MCF 10A (cell line): ENCODE measurements at regions of chr20 and their contacts with region 1.

Region 1: GRCh38 chr20:25039396-25040115 is 18.4 kb downstream of the ACSS1 start:
- DNase-seq: peak; percentile 90
- H3K4me3 Mint-ChIP-seq: peak overlapping the region; percentile 25
- H3K27ac Mint-ChIP-seq: peak overlapping the region; percentile 81
- H3K4me1 Mint-ChIP-seq: peaks cover 20% of the 10 kb centered on the region
- H3K27me3 Mint-ChIP-seq: peaks cover 11% of the 10 kb centered on the region
- CTCF ChIP-seq: no peak

Region 2: DNA sequence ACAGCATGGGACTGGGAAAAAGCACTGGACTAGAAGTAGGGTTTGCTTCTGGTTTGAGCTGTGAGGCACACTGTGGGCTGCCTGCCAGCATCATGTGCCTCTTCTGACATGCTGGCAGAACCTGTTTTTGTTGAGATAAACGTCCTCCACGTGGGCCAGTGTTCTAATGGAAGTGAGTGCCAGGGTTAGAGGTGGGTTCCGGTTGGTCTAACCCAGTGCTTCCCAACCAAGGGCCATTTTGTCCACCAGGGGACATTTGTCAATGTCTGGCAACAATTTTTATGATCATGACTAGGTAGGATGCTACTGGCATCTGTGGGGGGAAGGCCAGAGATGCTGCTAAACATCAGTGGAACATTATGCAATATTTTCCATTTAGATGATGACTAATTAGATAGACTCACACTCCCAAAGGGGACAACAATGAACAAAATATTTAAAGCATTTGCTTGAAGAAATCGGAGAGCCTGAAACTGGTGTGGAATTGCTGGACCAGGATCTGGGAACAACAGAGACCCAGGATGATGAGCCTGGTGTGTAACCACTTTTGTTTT is 39.2 kb before region 1 on chr20:
- CTCF ChIA-PET with region 1: interaction called, 43 read pairs
- POLR2A ChIA-PET with region 1: interaction called, 17 read pairs
- intact Hi-C with region 1: loop called (anchors 1 kb)
- DNase-seq: peak; percentile 73
- H3K4me3 Mint-ChIP-seq: no peak overlapping the region
- H3K27ac Mint-ChIP-seq: peak overlapping the region; percentile 84
- H3K4me1 Mint-ChIP-seq: peaks cover 38% of the 10 kb centered on the region
- H3K27me3 Mint-ChIP-seq: peaks cover 12% of the 10 kb centered on the region
- CTCF ChIP-seq: no peak

Region 3: GRCh38 chr20:25022687-25023086 is 16.9 kb before region 1 on chr20:
- CTCF ChIA-PET with region 1: interaction called, 30 read pairs
- POLR2A ChIA-PET with region 1: interaction called, 42 read pairs
- intact Hi-C with region 1: no loop called
- DNase-seq: peak; percentile 84
- H3K4me3 Mint-ChIP-seq: no peak overlapping the region
- H3K27ac Mint-ChIP-seq: no peak overlapping the region
- H3K4me1 Mint-ChIP-seq: peaks cover 17% of the 10 kb centered on the region
- H3K27me3 Mint-ChIP-seq: no peaks in the 10 kb centered on the region
- CTCF ChIP-seq: no peak

Region 4: DNA sequence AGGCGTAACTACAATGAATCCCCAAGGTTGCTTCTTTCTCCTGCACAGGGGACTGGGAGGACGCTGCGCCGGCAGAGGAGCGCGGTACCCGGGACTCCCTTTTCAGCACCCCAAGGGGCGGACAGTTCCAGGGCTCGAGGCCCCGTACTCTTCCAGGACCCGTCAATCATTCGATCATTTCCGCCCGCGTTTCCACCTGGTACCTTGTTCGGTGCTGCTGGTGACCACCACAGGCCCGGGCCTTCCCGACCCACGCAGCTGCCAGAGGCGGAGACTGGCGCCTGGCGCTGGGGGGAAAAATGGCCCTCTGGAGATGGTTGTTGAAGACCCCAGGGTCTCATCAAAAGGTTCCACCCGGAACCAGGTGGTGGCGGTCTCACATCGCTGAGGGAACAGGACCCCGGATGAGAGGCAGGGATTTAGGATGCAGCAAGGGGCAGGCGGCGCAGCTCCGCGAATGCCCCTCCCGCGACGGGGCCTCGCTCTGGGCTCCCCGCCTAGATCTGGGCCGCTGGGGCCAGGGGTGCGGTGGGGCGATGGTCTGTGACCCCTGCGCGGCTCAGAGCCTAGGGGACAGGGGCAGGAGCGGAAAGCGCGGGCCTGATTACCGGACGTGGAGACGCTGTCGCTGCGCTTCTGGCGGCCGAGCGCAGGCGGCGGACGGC is 41.6 kb after region 1 on chr20:
- CTCF ChIA-PET with region 1: no interaction called
- POLR2A ChIA-PET with region 1: no interaction called
- intact Hi-C with region 1: no loop called
- DNase-seq: no peak
- H3K4me3 Mint-ChIP-seq: no peak overlapping the region
- H3K27ac Mint-ChIP-seq: no peak overlapping the region
- H3K4me1 Mint-ChIP-seq: peaks cover 8% of the 10 kb centered on the region
- H3K27me3 Mint-ChIP-seq: peaks cover 48% of the 10 kb centered on the region
- CTCF ChIP-seq: no peak